ENCODE measurements at regions of chr10 and their contacts with region 1.

Region 1: DNA sequence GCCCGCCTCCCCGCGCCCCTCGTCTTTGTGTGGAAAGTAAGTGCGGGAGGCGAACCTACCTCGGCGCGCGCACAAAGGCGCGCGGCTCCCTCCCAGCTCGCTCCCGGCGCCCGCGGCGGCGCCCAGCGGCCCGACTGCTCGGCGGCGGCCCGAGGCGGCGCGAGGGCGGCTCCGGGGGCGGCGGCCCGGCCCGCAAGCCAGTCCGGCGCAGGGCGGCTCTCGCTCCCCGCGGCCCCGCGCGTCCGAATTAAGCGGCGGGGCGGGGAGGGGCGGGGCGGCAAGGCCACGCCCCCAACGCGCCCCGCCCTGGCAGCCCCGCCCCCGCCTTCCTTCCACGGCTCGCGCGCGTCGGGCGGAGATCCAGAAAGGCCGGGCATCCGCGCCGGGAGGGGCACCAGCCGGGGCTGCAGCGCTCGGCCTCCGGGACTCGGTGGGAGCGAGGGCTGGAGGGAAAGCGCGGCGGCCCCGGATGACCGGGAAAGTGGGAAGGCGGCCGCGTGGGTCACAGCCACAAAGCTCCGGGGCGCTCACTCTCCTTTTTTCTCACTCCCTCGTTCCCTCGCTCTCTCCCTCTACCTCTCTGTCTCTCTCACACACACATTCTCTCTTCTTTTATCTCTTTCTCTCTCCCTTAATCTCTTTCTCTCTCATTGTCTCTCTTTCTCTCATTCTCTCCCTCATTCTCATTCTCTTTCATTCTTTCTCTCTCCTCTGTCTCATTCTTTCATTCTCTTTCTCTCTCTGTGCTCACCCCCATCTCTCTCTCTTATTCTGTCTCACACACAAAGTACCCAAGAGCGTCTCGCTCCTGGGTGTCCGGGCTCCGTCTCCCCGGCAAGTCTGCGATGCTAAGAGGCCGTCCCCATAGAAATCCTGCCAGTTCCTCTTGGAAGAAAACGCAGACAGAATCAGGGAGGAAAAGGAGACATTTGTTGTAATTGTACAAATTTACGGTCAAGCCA is 170.2 kb downstream of the FAM107B start:
- DNase-seq: peak; percentile 90
- H3K4me3 ChIP-seq: peak overlapping the region; percentile 27 to 71 (median 62)
- H3K27ac ChIP-seq: peak overlapping the region; percentile 68 to 81 (median 77)
- H3K4me1 ChIP-seq: peaks cover 0 to 25% (median 12%) of the 10 kb centered on the region in 4 donors
- H3K27me3 ChIP-seq: no peaks in the 10 kb centered on the region
- CTCF ChIP-seq: no peak
- EP300 ChIP-seq: no peak
- POLR2A ChIP-seq: no peak

Region 2: GRCh38 chr10:13795653-13796555 is 808.6 kb before region 1 on chr10:
- intact Hi-C with region 1: no loop called
- DNase-seq: no peak
- H3K4me3 ChIP-seq: no peak overlapping the region
- H3K27ac ChIP-seq: no peak overlapping the region
- H3K4me1 ChIP-seq: no peaks in the 10 kb centered on the region
- H3K27me3 ChIP-seq: no peaks in the 10 kb centered on the region
- CTCF ChIP-seq: no peak
- EP300 ChIP-seq: no peak
- POLR2A ChIP-seq: no peak

Region 3: GRCh38 chr10:14450041-14450491 is 154.4 kb before region 1 on chr10:
- intact Hi-C with region 1: no loop called
- DNase-seq: no peak
- H3K4me3 ChIP-seq: no peak overlapping the region
- H3K27ac ChIP-seq: peak overlapping the region; percentile 24 to 68 (median 52)
- H3K4me1 ChIP-seq: peaks cover 0 to 26% (median 15%) of the 10 kb centered on the region in 4 donors
- H3K27me3 ChIP-seq: no peaks in the 10 kb centered on the region
- CTCF ChIP-seq: no peak
- EP300 ChIP-seq: no peak
- POLR2A ChIP-seq: no peak

Region 4: DNA sequence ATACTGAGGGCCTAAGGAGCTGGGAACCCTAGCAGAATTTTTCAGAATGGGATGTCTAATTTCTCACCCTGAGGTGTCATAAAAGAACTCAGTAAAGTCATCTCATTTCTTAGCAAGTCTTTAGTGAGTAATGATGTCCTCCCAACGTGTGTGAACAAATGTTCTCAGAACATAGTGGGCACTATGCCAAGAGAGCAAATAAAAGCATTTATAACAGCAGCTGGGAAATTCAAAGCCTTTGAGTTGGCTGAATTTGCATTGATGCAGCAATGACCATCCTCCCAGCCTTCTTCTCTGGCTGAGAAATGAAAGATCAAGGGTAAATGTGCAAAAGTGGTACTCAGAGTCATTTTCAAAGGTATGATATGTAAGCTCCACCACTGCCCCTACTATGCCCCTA is 60.8 kb after region 1 on chr10:
- intact Hi-C with region 1: loop called (anchors 2 kb)
- DNase-seq: no peak
- H3K4me3 ChIP-seq: no peak overlapping the region
- H3K27ac ChIP-seq: peak overlapping the region in 2 of 4 donors; percentile 40 to 63
- H3K4me1 ChIP-seq: peaks cover 0 to 51% (median 45%) of the 10 kb centered on the region in 4 donors
- H3K27me3 ChIP-seq: no peaks in the 10 kb centered on the region
- CTCF ChIP-seq: no peak
- EP300 ChIP-seq: no peak
- POLR2A ChIP-seq: no peak

Region 5: GRCh38 chr10:14822879-14823755 is 218.7 kb after region 1 on chr10:
- intact Hi-C with region 1: loop called (anchors 5 kb)
- DNase-seq: no peak
- H3K4me3 ChIP-seq: no peak overlapping the region
- H3K27ac ChIP-seq: no peak overlapping the region
- H3K4me1 ChIP-seq: peaks cover 0 to 6% (median 0%) of the 10 kb centered on the region in 4 donors
- H3K27me3 ChIP-seq: no peaks in the 10 kb centered on the region
- CTCF ChIP-seq: peak; percentile 17 to 60 (median 47)
- EP300 ChIP-seq: no peak
- POLR2A ChIP-seq: no peak

Region 6: GRCh38 chr10:14878266-14879054 is 274.0 kb after region 1 on chr10 and contains the start of gene SUV39H2:
- intact Hi-C with region 1: loop called (anchors 2 kb)
- DNase-seq: peak; percentile 98
- H3K4me3 ChIP-seq: peak within 1 kb of the TSS; percentile 58 to 99 (median 82)
- H3K27ac ChIP-seq: peak within 1 kb of the TSS; percentile 94 to 95 (median 94)
- H3K4me1 ChIP-seq: peaks cover 0 to 32% (median 17%) of the 10 kb centered on the region in 4 donors
- H3K27me3 ChIP-seq: no peaks in the 10 kb centered on the region
- CTCF ChIP-seq: no peak
- EP300 ChIP-seq: no peak
- POLR2A ChIP-seq: peak; percentile 40 to 45
- total RNA-seq, gene SUV39H2: 3.9 to 6.4 (median 5.3) TPM

Region 7: GRCh38 chr10:15088428-15089261 is 484.2 kb after region 1 on chr10 and contains the start of gene ACBD7:
- intact Hi-C with region 1: loop called (anchors 5 kb)
- DNase-seq: peak; percentile 85
- H3K4me3 ChIP-seq: peak within 1 kb of the TSS; percentile 30 to 57 (median 52)
- H3K27ac ChIP-seq: no peak within 1 kb of the TSS
- H3K4me1 ChIP-seq: peaks cover 0 to 19% (median 14%) of the 10 kb centered on the region in 4 donors
- H3K27me3 ChIP-seq: peaks cover 0 to 6% (median 0%) of the 10 kb centered on the region in 3 donors
- CTCF ChIP-seq: peak; percentile 19 to 68 (median 53)
- EP300 ChIP-seq: no peak
- POLR2A ChIP-seq: no peak
- total RNA-seq, gene ACBD7: not detected

Measured in sigmoid colon (tissue), 7 donors.